GM12878 (cell line): ENCODE measurements at regions of chr7 and their contacts with region 1.

Region 1: DNA sequence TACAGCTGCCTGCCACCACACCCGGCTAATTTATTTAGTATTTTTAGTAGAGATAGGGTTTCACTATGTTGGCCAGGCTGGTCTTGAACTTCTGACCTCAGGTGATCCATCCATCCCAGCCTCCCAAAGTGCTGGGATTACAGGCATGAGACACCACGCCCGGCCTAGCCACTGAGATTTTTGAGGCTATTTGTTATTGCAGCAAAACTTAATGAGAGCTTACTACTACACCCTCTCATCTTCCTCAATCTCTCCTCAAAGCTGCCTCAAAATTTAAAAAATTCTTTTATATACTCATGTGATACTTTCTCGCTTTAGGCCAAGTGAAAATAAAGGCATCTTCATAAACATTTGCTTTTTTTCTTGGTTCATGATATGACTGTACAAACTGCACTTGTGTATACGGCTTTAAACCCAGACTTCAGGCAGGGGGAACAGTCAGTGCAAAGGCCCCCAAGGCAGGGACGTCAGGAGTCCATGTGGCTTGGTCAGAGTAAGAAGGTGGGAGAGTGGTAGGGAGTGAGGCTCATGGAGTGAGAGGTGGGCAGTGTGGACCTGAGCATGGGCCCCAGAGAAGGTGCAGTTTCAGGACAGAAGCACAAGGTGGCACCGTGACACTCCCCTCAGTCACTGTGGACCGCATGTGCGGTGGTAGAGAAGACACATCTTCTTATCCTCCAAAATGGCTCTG is 55.5 kb downstream of the SYPL1 start:
- DNase-seq: no peak
- ATAC-seq: peak; percentile 75
- H3K4me3 ChIP-seq: no peak overlapping the region
- H3K27ac ChIP-seq: peak overlapping the region; percentile 97
- H3K4me1 ChIP-seq: peaks cover 52% of the 10 kb centered on the region
- H3K27me3 ChIP-seq: no peaks in the 10 kb centered on the region
- CTCF ChIP-seq: peak; percentile 90 to 93 (median 92)
- EP300 ChIP-seq: no peak
- POLR2A ChIP-seq: no peak
- RAD21 ChIP-seq: peak; percentile 95

Region 2: DNA sequence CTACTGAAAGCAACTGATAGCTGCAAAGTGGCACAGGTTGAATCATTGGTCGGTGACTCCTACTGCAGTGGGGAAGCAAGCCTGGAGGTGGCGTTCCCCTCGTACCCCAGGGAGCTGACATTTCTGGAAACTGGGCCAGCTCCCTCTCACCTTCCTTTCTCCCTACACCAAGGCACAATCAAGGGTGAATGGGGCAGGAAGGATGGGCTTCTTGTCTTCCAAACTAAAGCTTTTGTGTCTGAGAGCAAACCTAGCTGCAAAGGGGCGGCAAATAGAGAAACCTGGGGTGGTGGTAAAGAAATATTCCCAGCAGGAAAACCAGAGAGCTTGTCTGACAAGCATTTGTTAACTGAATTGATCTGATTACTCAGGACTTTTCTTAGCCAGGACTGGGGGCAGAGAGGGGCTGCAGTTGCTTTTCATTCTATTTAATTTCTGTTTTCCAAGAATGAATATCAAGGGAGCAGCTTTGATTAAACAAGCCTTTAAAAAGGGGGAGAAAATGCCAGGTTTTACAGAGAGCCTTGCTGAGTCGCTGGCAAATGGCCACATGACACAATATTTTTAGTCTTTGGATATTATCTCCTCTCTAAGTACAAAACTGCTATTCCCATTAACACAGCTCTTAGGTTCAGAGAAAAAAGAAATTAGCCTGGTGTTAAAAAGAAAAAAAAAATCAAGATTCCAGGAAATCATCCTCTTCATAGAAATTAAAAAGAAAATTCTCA is 65.8 kb before region 1 on chr7:
- CTCF ChIA-PET with region 1: no interaction called
- POLR2A ChIA-PET with region 1: no interaction called
- RAD21 ChIA-PET with region 1: no interaction called
- SMC1A ChIA-PET with region 1: no interaction called
- in situ Hi-C with region 1: no loop called
- intact Hi-C with region 1: no loop called
- DNase-seq: no peak
- ATAC-seq: no peak
- H3K4me3 ChIP-seq: no peak overlapping the region
- H3K27ac ChIP-seq: no peak overlapping the region
- H3K4me1 ChIP-seq: no peaks in the 10 kb centered on the region
- H3K27me3 ChIP-seq: peaks cover 0 to 3% of the 10 kb centered on the region in 2 experiments; a peak in 2 of 4 replicates
- CTCF ChIP-seq: no peak
- EP300 ChIP-seq: no peak
- POLR2A ChIP-seq: no peak
- RAD21 ChIP-seq: no peak

Region 3: DNA sequence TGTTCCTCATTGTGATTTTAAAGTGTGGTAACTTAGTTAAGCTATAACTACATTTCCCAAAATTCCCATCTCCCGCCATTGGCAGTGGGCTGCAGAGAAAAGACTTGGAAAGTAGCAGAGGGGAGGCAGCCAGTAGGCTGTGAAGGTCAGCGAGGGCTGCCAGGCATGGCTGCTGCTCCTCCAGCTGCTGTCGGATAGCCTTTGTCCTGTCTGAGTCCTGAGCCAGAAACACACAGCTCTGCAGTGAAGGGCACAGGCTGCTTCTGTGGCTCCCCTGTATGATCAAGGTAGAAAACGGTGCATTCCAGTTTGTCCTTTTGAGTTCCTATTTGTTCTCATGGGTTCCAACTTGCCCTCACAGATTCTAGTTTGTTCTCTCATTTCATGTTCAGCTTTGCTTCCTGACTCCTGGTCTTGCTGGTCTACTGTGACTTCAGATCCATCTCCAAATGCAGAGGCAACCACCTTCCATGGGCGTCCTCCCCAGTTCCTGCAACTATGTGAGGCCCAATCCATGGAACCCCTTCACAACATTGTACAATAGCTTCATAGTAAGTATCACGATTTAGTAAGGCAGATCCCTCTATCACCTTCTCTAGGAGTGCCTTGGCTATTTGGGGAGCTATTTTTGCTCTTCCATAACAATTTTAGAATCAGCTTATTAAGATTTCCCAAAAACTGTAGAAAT is 23.8 kb after region 1 on chr7:
- CTCF ChIA-PET with region 1: interaction called, 16 read pairs
- POLR2A ChIA-PET with region 1: interaction called, 7 read pairs
- RAD21 ChIA-PET with region 1: interaction called, 118 read pairs
- SMC1A ChIA-PET with region 1: interaction called, 164 read pairs
- in situ Hi-C with region 1: no loop called
- intact Hi-C with region 1: no loop called
- DNase-seq: no peak
- ATAC-seq: no peak
- H3K4me3 ChIP-seq: no peak overlapping the region
- H3K27ac ChIP-seq: no peak overlapping the region
- H3K4me1 ChIP-seq: peaks cover 12% of the 10 kb centered on the region
- H3K27me3 ChIP-seq: no peaks in the 10 kb centered on the region
- CTCF ChIP-seq: no peak
- EP300 ChIP-seq: no peak
- POLR2A ChIP-seq: no peak
- RAD21 ChIP-seq: no peak

Region 4: DNA sequence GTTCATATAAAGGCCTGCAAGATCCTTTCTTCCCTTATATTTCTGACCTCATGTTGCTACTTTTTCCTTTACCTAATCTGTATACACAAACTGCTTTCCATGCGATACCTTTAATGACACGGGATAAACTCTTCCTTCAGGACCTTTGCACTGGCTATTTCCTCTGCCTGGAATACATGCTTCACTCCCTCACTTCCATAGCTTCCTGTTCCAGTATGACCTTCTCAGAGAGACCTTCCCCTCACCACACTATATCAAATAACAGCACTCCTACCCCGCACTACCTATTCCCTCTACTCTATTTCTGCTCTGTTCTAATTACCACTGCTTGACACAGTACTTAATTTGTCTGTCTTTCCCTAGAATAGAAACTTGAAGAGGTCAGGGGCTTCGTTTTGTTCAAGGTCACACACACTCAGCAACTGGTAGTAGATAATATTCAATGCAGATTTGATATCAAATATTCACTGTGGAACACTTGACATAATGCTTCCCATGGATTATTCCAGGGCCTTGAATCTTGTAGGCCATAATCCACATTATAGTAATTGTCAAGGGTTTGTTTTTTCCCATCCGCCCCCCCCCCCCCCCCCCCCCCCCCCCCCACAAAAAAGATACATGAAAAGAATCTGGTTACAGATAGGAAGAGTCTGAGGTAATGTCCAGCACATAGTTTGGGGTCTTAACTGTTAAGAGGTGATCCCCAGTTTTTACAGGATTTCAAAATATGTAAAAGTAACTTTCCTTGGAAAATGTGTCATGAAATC is 44.4 kb after region 1 on chr7:
- CTCF ChIA-PET with region 1: interaction called, 6 read pairs
- POLR2A ChIA-PET with region 1: interaction called, 3 read pairs
- RAD21 ChIA-PET with region 1: interaction called, 12 read pairs
- SMC1A ChIA-PET with region 1: interaction called, 23 read pairs
- in situ Hi-C with region 1: no loop called
- intact Hi-C with region 1: no loop called
- DNase-seq: no peak
- ATAC-seq: peak; percentile 8; the same call in 1 of the 3 replicates
- H3K4me3 ChIP-seq: 0 out of 2 replicates have a peak overlapping the region, but pooled peaks have one; percentile 9
- H3K27ac ChIP-seq: no peak overlapping the region
- H3K4me1 ChIP-seq: peaks cover 16% of the 10 kb centered on the region
- H3K27me3 ChIP-seq: no peaks in the 10 kb centered on the region
- CTCF ChIP-seq: no peak
- EP300 ChIP-seq: no peak
- POLR2A ChIP-seq: no peak
- RAD21 ChIP-seq: no peak

Region 5: GRCh38 chr7:106166655-106167342 is 110.1 kb after region 1 on chr7:
- CTCF ChIA-PET with region 1: interaction called, 57 read pairs
- POLR2A ChIA-PET with region 1: interaction called, 4 read pairs
- RAD21 ChIA-PET with region 1: interaction called, 20 read pairs
- SMC1A ChIA-PET with region 1: interaction called, 26 read pairs
- in situ Hi-C with region 1: no loop called
- intact Hi-C with region 1: loop called (anchors 1 kb)
- DNase-seq: no peak
- ATAC-seq: peak; percentile 77
- H3K4me3 ChIP-seq: no peak overlapping the region
- H3K27ac ChIP-seq: no peak overlapping the region
- H3K4me1 ChIP-seq: no peaks in the 10 kb centered on the region
- H3K27me3 ChIP-seq: no peaks in the 10 kb centered on the region
- CTCF ChIP-seq: peak; percentile 68 to 77 (median 72); a peak in 5 of 6 replicates
- EP300 ChIP-seq: no peak
- POLR2A ChIP-seq: no peak
- RAD21 ChIP-seq: peak; percentile 85